ENCODE measurements at regions of chr6 and their contacts with region 1.

Region 1: DNA sequence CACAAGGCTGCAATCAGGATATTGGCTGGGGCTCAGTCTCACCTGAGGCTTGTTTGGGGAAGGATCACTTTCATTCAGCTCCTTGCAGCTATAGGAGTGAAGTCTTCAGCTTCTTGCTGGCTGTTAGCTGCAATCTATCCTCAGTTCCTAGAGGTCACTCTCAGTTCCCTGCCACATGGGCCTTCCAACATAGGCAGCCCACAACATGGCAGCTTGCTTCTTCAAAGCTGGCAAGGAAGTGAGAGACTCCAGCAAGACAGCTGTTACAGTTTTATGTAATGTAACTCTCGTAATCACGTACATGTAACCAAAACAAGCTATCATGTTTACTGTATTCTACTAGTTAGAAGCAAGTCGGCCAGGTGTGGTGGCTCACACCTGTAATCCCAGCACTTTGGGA is 226.9 kb downstream of the CDC5L start:
- DNase-seq: no peak
- ATAC-seq: no peak
- H3K4me3 Mint-ChIP-seq: no peak overlapping the region
- H3K27ac Mint-ChIP-seq: no peak overlapping the region
- H3K4me1 Mint-ChIP-seq: no peaks in the 10 kb centered on the region
- H3K27me3 Mint-ChIP-seq: peaks cover 2% of the 10 kb centered on the region

Region 2: DNA sequence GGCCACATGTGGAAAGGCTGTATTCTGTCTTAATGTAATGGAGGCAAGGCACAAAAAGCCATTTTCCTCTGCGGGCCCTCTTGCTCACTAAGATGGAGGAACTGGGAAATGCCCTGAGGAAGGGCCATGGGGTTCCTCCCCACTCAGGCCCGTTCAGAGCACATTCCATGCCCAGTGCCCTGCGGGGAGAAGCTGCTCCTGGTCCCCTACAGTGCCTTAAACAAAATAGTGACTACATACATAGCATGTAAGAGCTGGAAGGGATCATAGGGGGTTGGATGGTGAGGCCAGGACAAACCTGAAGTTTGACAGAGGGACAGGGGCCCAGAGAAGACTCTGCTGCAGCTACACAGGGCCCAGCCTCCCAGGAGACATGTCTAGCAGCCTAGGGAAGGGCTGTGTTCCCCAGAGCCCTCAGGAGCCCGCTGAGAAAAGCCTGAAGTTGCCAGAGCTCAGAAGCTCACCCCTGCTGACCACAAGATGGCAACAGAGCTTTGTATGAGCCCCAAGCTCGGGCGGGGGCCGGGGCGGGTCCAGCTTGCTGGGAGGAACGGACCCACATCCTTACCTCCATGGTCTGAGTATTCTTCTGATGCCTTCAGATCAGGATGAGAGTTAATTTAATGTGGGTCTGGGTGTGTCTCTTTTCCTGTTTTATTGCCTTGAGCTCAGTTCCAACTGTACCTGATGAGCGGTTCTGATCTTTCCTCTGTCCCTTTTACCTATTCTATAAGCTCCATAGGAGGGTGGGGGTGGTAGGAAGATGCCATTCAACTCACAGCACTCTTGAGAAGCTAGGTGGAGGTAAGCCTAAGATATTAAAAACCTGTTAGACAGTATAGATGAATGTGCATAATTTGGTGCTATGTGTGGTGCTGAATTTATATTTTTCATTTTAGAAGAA is 16.0 kb after region 1 on chr6:
- CTCF ChIA-PET with region 1: interaction called, 11 read pairs
- POLR2A ChIA-PET with region 1: no interaction called
- intact Hi-C with region 1: no loop called
- DNase-seq: peak; percentile 68
- ATAC-seq: peak; percentile 76
- H3K4me3 Mint-ChIP-seq: no peak overlapping the region
- H3K27ac Mint-ChIP-seq: no peak overlapping the region
- H3K4me1 Mint-ChIP-seq: peaks cover 17% of the 10 kb centered on the region
- H3K27me3 Mint-ChIP-seq: peaks cover 4% of the 10 kb centered on the region

Region 3: GRCh38 chr6:46044881-46045617 is 1430.7 kb after region 1 on chr6:
- CTCF ChIA-PET with region 1: no interaction called
- POLR2A ChIA-PET with region 1: no interaction called
- intact Hi-C with region 1: no loop called
- DNase-seq: peak; percentile 43
- ATAC-seq: peak; percentile 86
- H3K4me3 Mint-ChIP-seq: no peak overlapping the region
- H3K27ac Mint-ChIP-seq: no peak overlapping the region
- H3K4me1 Mint-ChIP-seq: peaks cover 10% of the 10 kb centered on the region
- H3K27me3 Mint-ChIP-seq: no peaks in the 10 kb centered on the region